Prostate gland (tissue), 2 donors: ENCODE measurements at regions of chr16 and their contacts with region 1.

Region 1: GRCh38 chr16:76318565-76318964 is 41.4 kb downstream of the CNTNAP4 start:
- DNase-seq: no peak
- H3K4me3 ChIP-seq: no peak overlapping the region
- H3K27ac ChIP-seq: no peak overlapping the region
- H3K4me1 ChIP-seq: no peaks in the 10 kb centered on the region
- H3K27me3 ChIP-seq: no peaks in the 10 kb centered on the region
- CTCF ChIP-seq: no peak
- POLR2A ChIP-seq: no peak

Region 2: DNA sequence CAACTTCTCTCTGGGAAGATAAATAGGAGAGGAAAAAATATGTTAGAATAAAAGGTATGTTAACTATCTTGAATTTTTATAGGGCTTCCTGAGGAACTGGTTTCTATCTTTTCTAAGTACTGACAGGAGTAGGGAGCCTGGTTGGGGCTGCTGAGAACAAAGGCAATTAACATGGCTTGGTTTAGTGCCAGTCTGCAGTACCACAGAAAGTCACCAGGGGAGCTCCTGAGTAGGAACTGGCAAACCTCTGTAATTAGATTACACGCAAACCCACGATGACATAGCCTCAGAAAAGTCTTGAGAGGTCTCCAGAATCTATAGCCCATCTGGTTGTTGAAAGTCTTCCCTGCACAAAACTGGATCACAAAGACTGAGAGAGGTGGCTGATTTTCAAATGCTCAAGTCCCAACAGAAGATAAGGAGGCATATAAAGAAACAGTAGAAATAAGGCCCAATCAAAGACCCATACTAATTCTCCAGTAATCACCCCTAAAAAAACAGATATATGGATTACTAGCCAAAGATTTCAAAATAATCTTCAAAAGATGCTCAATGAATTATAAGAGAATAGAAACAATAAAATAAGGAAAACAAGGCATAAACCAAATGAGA is 53.0 kb before region 1 on chr16:
- intact Hi-C with region 1: loop called (anchors 5 kb)
- DNase-seq: no peak
- H3K4me3 ChIP-seq: no peak overlapping the region
- H3K27ac ChIP-seq: no peak overlapping the region
- H3K4me1 ChIP-seq: no peaks in the 10 kb centered on the region
- H3K27me3 ChIP-seq: no peaks in the 10 kb centered on the region
- CTCF ChIP-seq: no peak
- POLR2A ChIP-seq: no peak